ENCODE measurements at regions of chr13 and their contacts with region 1.

Region 1: DNA sequence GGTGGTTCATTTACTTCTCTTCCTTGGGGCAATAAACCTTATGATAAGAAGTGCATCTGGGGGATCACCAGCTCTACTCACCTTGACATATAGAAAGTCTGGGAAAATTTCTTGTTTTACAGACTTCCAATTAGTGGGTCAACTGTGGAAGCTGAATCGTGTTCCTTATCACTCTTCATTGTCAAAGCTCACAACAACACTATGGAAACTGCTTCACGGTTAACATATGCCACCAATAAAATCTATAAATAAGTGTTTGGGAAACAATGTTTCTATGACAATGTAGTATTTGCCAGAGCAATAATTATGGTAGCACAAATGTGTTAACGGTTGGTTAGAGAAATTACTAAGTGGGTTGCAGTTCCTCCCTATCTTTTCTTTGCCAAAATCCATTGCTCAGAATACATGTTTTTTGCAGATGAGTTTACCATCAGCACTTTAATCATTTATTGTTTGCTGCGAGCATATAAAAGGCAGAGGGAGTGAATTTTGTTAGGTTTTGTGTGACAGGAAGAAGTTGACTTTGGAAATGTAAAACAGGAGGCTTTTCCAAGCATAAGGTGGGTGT is 321.8 kb downstream of the RFC3 start:
- DNase-seq: no peak
- ATAC-seq: no peak
- H3K4me3 ChIP-seq: no peak overlapping the region
- H3K27ac ChIP-seq: no peak overlapping the region
- H3K4me1 ChIP-seq: peaks cover 0 to 7% (median 0%) of the 10 kb centered on the region in 12 donors
- H3K27me3 ChIP-seq: no peaks in the 10 kb centered on the region
- CTCF ChIP-seq: no peak
- POLR2A ChIP-seq: no peak

Region 2: GRCh38 chr13:33931397-33932311 is 208.1 kb before region 1 on chr13:
- intact Hi-C with region 1: no loop called
- DNase-seq: peak in 1 of 5 donors; percentile 20
- ATAC-seq: peak in 3 of 4 donors; percentile 79 to 87 (median 84)
- H3K4me3 ChIP-seq: no peak overlapping the region
- H3K27ac ChIP-seq: no peak overlapping the region
- H3K4me1 ChIP-seq: peaks cover 0 to 12% (median 0%) of the 10 kb centered on the region in 12 donors
- H3K27me3 ChIP-seq: no peaks in the 10 kb centered on the region
- CTCF ChIP-seq: peak; percentile 26 to 71 (median 57)
- POLR2A ChIP-seq: no peak

Region 3: DNA sequence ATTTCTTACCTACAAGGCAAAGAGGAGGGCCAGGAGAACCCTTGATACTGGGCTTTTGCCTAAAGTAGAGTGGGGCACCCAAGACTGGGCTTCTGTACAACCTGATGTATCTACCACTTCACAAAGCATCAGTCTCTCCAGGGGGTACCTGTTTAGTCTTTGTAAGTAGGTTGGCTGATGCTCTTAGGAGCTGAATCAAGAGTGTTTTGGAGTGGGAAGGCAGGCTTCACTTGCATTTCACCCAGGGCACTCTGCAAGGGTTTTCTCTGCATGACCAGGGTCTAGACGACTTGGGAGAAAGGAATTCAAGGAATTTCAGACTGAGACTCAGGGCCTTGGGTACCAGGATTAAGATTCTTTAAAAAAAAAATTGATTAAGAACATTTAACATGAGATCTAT is 39.7 kb after region 1 on chr13:
- intact Hi-C with region 1: no loop called
- DNase-seq: no peak
- ATAC-seq: no peak
- H3K4me3 ChIP-seq: no peak overlapping the region
- H3K27ac ChIP-seq: no peak overlapping the region
- H3K4me1 ChIP-seq: peaks cover 0 to 2% (median 0%) of the 10 kb centered on the region in 12 donors
- H3K27me3 ChIP-seq: no peaks in the 10 kb centered on the region
- CTCF ChIP-seq: no peak
- POLR2A ChIP-seq: no peak

Region 4: GRCh38 chr13:34322014-34322742 is 182.4 kb after region 1 on chr13:
- intact Hi-C with region 1: loop called in 1 of 10 experiments (anchors 5 kb)
- DNase-seq: peak in 3 of 5 donors; percentile 10 to 30 (median 25)
- ATAC-seq: peak; percentile 51 to 90 (median 77)
- H3K4me3 ChIP-seq: no peak overlapping the region
- H3K27ac ChIP-seq: peak overlapping the region in 3 of 12 donors; percentile 30 to 52 (median 43)
- H3K4me1 ChIP-seq: peaks cover 0 to 8% (median 0%) of the 10 kb centered on the region in 12 donors
- H3K27me3 ChIP-seq: no peaks in the 10 kb centered on the region
- CTCF ChIP-seq: no peak
- POLR2A ChIP-seq: no peak

Measured in heart left ventricle (tissue), 16 donors.